ENCODE measurements at regions of chrX and their contacts with region 1.

Region 1: GRCh38 chrX:22950269-22951266 is 49.2 kb upstream of the DDX53 start:
- DNase-seq: no peak
- ATAC-seq: no peak
- H3K4me3 ChIP-seq: no peak overlapping the region
- H3K27ac ChIP-seq: no peak overlapping the region
- H3K4me1 ChIP-seq: no peaks in the 10 kb centered on the region
- H3K27me3 ChIP-seq: no peaks in the 10 kb centered on the region
- CTCF ChIP-seq: no peak
- EP300 ChIP-seq: no peak
- POLR2A ChIP-seq: no peak
- RAD21 ChIP-seq: no peak

Region 2: GRCh38 chrX:22969411-22969810 is 18.8 kb after region 1 on chrX:
- CTCF ChIA-PET with region 1: no interaction called
- POLR2A ChIA-PET with region 1: no interaction called
- in situ Hi-C with region 1: no loop called
- intact Hi-C with region 1: loop called (anchors 1 kb)
- DNase-seq: no peak
- ATAC-seq: no peak
- H3K4me3 ChIP-seq: no peak overlapping the region
- H3K27ac ChIP-seq: no peak overlapping the region
- H3K4me1 ChIP-seq: no peaks in the 10 kb centered on the region
- H3K27me3 ChIP-seq: no peaks in the 10 kb centered on the region
- CTCF ChIP-seq: no peak
- EP300 ChIP-seq: no peak
- POLR2A ChIP-seq: no peak
- RAD21 ChIP-seq: no peak

Region 3: DNA sequence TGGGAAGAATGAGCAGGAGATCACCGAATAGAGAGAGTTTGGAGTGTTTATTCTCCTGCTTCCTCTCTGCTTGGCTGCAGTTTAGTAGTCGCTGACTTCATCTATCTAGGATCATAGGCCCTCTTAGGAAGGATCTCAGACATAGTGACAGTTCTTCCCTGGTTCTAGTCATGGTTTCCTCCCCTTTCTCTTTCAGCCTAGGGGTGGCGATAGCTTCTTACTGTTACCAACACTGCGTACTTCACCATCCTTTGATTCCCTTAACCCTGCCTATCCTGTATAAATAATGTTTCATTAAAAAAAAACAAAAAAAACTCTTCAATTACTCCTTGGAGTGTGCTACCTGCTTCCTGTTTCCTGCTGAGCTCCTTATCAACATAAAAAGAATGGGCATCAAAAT is 153.0 kb after region 1 on chrX:
- CTCF ChIA-PET with region 1: no interaction called
- POLR2A ChIA-PET with region 1: no interaction called
- in situ Hi-C with region 1: no loop called
- intact Hi-C with region 1: no loop called
- DNase-seq: no peak
- ATAC-seq: no peak
- H3K4me3 ChIP-seq: no peak overlapping the region
- H3K27ac ChIP-seq: no peak overlapping the region
- H3K4me1 ChIP-seq: no peaks in the 10 kb centered on the region
- H3K27me3 ChIP-seq: no peaks in the 10 kb centered on the region
- CTCF ChIP-seq: no peak
- EP300 ChIP-seq: no peak
- POLR2A ChIP-seq: no peak
- RAD21 ChIP-seq: no peak

Region 4: GRCh38 chrX:23403853-23404252 is 453.3 kb after region 1 on chrX:
- CTCF ChIA-PET with region 1: no interaction called
- POLR2A ChIA-PET with region 1: no interaction called
- in situ Hi-C with region 1: no loop called
- intact Hi-C with region 1: no loop called
- DNase-seq: no peak
- ATAC-seq: no peak
- H3K4me3 ChIP-seq: no peak overlapping the region
- H3K27ac ChIP-seq: no peak overlapping the region
- H3K4me1 ChIP-seq: no peaks in the 10 kb centered on the region
- H3K27me3 ChIP-seq: no peaks in the 10 kb centered on the region
- CTCF ChIP-seq: peak; percentile 19; the same call in 1 of the 2 replicates
- EP300 ChIP-seq: no peak
- POLR2A ChIP-seq: no peak
- RAD21 ChIP-seq: no peak

Measured in HepG2 (cell line).